H1 (cell line): ENCODE measurements at regions of chr14 and their contacts with region 1.

Region 1: GRCh38 chr14:50860478-50861086 is 11.3 kb upstream of the ABHD12B start:
- DNase-seq: peak; percentile 61 to 94
- H3K4me3 ChIP-seq: peak overlapping the region in 1 of 4 experiments; percentile 37; a peak in 1 of 8 replicates
- H3K27ac ChIP-seq: no peak overlapping the region
- H3K4me1 ChIP-seq: peaks cover 0 to 8% (median 5%) of the 10 kb centered on the region in 4 experiments; a peak in 4 of 7 replicates
- H3K27me3 ChIP-seq: no peaks in the 10 kb centered on the region
- CTCF ChIP-seq: peak; percentile 50 to 57 (median 54)
- EP300 ChIP-seq: no peak
- POLR2A ChIP-seq: no peak
- RAD21 ChIP-seq: peak; percentile 64 to 80

Region 2: DNA sequence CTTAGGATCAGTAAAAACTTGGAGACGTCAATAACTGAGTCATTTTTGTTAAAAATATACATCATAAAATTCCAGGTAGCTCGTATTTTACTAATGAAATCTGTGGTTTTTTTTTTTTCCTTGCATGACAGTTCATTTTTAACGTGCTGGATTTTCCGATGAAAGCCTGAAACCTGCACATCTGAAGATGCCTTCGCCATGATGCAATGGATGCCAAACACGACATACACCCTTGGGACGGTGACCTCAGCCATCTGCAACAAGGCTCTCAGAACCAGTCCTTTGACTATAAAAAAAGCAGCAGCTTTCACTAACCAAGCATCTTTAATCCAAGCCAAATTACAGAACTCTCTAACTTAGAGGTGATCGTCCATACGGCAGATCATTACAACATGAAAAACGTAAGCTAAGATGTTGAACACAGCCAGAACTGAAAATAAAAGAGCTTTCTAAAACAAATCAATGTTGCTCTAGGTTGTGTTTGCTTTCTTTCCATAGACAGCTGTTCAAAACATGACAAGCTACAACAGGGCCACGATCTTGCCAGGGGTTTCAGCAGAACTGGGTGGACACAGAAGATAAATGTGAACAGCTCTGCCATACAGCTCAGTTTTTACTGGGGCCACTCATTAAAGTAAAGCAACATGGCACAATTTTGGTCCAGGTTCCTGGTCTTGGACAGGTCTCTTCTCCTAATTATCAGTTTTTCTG is 37.4 kb before region 1 on chr14:
- CTCF ChIA-PET with region 1: interaction called, 23 read pairs
- POLR2A ChIA-PET with region 1: interaction called, 4 read pairs
- DNase-seq: no peak
- H3K4me3 ChIP-seq: no peak overlapping the region
- H3K27ac ChIP-seq: no peak overlapping the region
- H3K4me1 ChIP-seq: peaks cover 6 to 15% (median 10%) of the 10 kb centered on the region in 4 experiments; a peak in 6 of 7 replicates
- H3K27me3 ChIP-seq: peaks cover 3 to 38% (median 13%) of the 10 kb centered on the region in 4 experiments; a peak in 6 of 7 replicates
- CTCF ChIP-seq: no peak
- EP300 ChIP-seq: no peak
- POLR2A ChIP-seq: no peak
- RAD21 ChIP-seq: no peak

Region 3: DNA sequence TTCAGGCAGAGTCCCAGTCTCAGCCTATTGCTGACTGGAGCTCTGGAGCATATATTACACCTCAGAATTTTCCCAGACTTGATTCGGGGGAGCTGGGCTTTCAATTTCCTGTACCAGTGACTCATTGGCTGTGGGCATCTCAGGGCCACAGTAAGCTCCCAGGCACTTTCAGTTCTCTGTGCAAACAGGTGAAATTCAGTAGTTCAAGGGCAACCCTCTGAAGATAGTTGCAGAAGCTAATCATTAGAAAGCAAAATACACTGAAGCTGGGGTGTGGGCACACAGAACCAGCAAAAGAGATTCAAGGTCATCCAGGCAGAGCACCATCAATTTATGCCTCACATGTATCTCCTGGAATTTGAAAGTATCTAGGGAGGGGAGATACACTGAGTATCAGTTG is 21.5 kb before region 1 on chr14:
- CTCF ChIA-PET with region 1: interaction called, 37 read pairs
- POLR2A ChIA-PET with region 1: no interaction called
- DNase-seq: no peak
- H3K4me3 ChIP-seq: no peak overlapping the region
- H3K27ac ChIP-seq: no peak overlapping the region
- H3K4me1 ChIP-seq: no peaks in the 10 kb centered on the region
- H3K27me3 ChIP-seq: no peaks in the 10 kb centered on the region; a peak in 2 of 7 replicates
- CTCF ChIP-seq: no peak
- EP300 ChIP-seq: no peak
- POLR2A ChIP-seq: no peak
- RAD21 ChIP-seq: no peak

Region 4: GRCh38 chr14:50846226-50846880 is 14.2 kb before region 1 on chr14:
- CTCF ChIA-PET with region 1: interaction called, 37 read pairs
- POLR2A ChIA-PET with region 1: interaction called, 3 read pairs
- DNase-seq: no peak
- H3K4me3 ChIP-seq: no peak overlapping the region
- H3K27ac ChIP-seq: no peak overlapping the region
- H3K4me1 ChIP-seq: no peaks in the 10 kb centered on the region
- H3K27me3 ChIP-seq: no peaks in the 10 kb centered on the region
- CTCF ChIP-seq: no peak
- EP300 ChIP-seq: no peak
- POLR2A ChIP-seq: no peak
- RAD21 ChIP-seq: no peak

Region 5: DNA sequence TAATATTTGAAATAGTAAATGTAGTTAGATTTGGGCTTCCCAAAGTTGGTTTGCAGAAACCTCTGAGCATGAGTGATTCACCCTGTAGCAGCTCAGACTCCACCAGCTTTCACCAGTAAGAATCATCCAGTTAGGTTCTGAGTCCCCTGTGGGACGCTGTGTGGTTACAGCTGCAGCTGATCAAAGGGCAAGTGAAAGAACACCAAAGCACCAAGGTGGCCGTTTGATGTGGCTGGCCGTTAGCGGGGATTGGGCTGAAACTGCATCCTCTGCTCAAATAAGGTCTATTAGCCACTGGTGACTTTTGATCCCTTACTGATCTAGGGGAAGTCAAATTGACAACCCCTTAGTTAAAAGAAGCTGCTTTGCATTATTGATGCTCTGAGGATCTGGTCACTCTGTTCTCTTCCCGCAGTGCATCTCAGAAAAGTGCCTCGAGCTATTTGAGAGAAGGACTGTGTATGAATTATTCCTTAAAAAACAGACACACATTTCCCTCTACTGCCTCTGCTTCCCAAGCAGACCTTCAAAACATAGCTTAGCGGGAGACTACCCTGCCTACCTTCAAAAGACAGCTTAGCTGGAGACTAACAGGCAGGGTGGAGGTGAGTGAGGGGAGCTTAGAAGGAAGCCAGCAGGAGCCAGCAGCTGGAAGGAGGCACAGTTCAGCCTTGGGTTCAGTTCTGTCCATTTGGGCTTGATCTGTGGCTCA is 14.9 kb after region 1 on chr14:
- CTCF ChIA-PET with region 1: interaction called, 24 read pairs
- POLR2A ChIA-PET with region 1: interaction called, 3 read pairs
- DNase-seq: no peak
- H3K4me3 ChIP-seq: no peak overlapping the region
- H3K27ac ChIP-seq: no peak overlapping the region
- H3K4me1 ChIP-seq: peaks cover 0 to 3% (median 1%) of the 10 kb centered on the region in 4 experiments; a peak in 1 of 7 replicates
- H3K27me3 ChIP-seq: peaks cover 3 to 24% (median 14%) of the 10 kb centered on the region in 4 experiments; a peak in 6 of 7 replicates
- CTCF ChIP-seq: no peak
- EP300 ChIP-seq: no peak
- POLR2A ChIP-seq: no peak
- RAD21 ChIP-seq: no peak